ENCODE measurements at regions of chrX and their contacts with region 1.

Region 1: DNA sequence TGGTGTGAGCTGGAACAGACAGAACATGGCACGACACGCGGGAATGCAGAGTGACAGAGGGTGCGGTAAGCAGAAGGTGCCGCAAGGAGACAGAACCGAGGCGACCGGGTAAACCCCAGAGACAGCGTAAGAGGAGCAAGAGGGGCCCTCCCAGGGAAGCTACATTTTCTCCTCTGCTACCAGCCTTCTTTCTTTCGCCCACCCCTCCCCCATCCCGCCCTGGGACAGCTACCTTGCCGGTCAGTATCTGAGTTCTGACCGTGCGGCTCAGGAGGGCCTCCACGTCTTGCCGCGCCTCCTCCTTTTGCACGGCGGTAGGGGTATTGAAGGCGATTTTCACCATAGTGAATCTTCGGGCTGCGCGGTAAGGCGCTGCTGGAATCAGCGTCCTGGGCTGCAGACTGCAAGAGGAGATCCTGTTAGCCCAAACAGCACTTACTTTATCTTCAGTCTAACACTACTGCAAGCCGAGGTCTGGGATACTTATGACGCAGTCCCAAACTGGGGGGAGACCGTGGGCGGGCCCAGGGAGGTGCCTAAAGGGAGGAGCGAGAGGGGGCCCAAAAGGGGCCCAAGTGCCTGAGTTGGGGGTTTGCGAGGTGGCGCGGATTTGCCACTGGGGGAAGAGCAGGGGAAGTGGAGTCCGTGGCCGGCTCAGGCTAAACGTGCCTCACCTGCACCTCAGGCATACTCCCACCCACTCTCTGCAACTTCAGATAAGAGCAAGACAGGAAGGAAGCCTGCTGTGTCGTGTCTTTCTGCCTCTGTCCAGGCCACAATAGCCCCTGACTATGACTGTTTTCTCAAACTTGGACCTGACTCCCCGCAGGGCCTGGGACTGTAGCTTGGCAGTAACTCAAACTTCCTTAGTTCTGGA is at the start of gene ITM2A:
- DNase-seq: peak; percentile 86
- H3K4me3 Mint-ChIP-seq: peak within 1 kb of the TSS; percentile 99
- H3K27ac Mint-ChIP-seq: peak within 1 kb of the TSS; percentile 99
- H3K4me1 Mint-ChIP-seq: peaks cover 30% of the 10 kb centered on the region
- H3K27me3 Mint-ChIP-seq: no peaks in the 10 kb centered on the region
- total RNA-seq, gene ITM2A: 102 and 113 TPM in 2 replicates

Region 2: GRCh38 chrX:77899081-77899828 is 1467.9 kb before region 1 on chrX and contains the start of gene COX7B:
- intact Hi-C with region 1: loop called (anchors 10 kb)
- DNase-seq: peak; percentile 91
- H3K4me3 Mint-ChIP-seq: peak within 1 kb of the TSS; percentile 90
- H3K27ac Mint-ChIP-seq: peak within 1 kb of the TSS; percentile 97
- H3K4me1 Mint-ChIP-seq: peaks cover 9% of the 10 kb centered on the region
- H3K27me3 Mint-ChIP-seq: no peaks in the 10 kb centered on the region
- total RNA-seq, gene COX7B: 281 and 301 TPM in 2 replicates

Region 3: GRCh38 chrX:78321809-78322208 is 1045.3 kb before region 1 on chrX:
- intact Hi-C with region 1: loop called (anchors 10 kb)
- DNase-seq: peak; percentile 83
- H3K4me3 Mint-ChIP-seq: peak overlapping the region; percentile 86
- H3K27ac Mint-ChIP-seq: peak overlapping the region; percentile 96
- H3K4me1 Mint-ChIP-seq: peaks cover 34% of the 10 kb centered on the region
- H3K27me3 Mint-ChIP-seq: no peaks in the 10 kb centered on the region

Region 4: DNA sequence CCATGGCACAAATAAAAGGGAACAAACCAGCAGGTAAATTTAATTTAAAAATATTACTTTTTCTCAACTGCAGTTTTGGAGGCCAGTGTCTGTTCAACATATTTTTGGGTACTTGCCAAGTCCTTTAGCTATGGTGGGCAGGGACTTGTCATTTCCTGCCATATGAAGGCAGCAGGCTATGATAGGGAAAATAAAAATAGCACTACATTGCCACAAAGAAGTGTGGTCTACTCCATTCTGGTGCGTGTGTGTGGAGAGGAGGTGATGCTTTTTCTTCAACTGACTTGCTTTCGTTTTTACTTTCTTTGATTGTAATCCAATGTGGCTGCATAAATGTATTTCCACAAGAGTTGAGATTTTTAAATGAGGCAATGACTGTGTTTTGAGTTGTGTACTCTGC is 205.5 kb before region 1 on chrX:
- intact Hi-C with region 1: loop called (anchors 2 kb)
- DNase-seq: peak; percentile 85
- H3K4me3 Mint-ChIP-seq: peak overlapping the region; percentile 82
- H3K27ac Mint-ChIP-seq: peak overlapping the region; percentile 98
- H3K4me1 Mint-ChIP-seq: peaks cover 40% of the 10 kb centered on the region
- H3K27me3 Mint-ChIP-seq: no peaks in the 10 kb centered on the region

Region 5: DNA sequence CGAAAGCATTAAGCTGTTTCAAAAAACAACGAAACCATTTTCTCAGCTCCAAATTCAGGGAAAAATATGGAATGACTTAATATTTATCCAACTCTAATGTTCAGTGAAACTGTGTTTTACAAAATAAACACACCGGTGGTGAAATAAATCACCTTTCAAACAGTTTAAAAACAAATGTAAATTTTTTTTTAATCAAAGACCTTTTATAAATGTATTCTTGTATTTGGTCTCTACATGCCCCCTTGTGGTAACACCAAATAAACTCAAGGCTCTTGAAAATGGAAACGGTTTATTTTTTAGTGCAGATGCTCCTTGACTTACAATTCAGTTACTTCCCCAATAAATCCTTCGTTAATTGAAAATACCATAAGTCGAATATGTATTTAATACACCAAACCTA is 45.9 kb after region 1 on chrX:
- intact Hi-C with region 1: loop called (anchors 2 kb)
- DNase-seq: no peak
- H3K4me3 Mint-ChIP-seq: peak overlapping the region; percentile 69
- H3K27ac Mint-ChIP-seq: peak overlapping the region; percentile 53
- H3K4me1 Mint-ChIP-seq: peaks cover 18% of the 10 kb centered on the region
- H3K27me3 Mint-ChIP-seq: no peaks in the 10 kb centered on the region